Esophagus muscularis mucosa (tissue), 4 donors: ENCODE measurements at regions of chr20 and their contacts with region 1.

Region 1: DNA sequence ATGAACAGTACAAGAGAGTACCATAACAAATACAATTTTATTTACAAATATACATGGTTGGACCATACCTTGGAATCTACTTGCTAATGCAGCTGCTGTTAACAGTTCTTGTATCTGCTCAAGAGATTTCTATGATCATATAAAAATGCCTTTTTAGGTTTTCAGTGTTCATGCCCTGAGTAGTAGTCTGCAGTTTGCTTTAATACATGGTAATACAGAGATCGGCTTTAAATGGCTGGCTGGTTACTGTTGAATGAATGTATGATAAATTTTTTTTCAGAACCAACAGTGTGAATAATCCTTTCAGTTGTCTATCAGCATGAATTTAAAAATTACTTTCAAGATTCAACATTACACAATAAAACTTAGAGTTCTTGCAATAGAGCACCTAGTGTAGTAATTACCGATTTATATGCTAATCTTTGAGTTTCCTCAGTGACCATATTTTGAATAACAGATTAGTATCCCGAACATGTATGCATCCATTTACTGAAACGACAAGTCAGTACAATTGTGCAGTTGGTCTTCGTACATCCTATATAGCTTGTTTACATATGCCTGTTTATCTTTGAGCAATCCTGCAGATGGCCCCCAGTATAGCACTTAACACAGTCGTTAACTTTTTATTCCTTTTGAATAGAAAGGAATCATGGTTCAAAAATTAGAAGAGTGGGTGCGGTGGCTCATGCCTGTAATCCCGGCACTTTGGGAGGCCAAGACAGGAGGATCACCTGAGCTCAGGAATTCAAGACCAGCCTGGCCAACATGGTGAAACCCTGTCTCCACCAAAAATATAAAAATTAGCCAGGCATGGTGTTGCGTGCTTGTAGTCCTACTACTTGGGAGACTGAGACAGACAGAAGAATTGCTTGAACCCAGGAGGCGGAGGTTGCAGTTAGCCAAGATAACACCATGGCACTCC is 6.4 kb downstream of the SRSF6 start:
- DNase-seq: no peak
- H3K4me3 ChIP-seq: no peak overlapping the region
- H3K27ac ChIP-seq: no peak overlapping the region
- H3K4me1 ChIP-seq: peaks cover 9 to 41% (median 28%) of the 10 kb centered on the region in 4 donors
- H3K27me3 ChIP-seq: no peaks in the 10 kb centered on the region
- CTCF ChIP-seq: no peak
- EP300 ChIP-seq: no peak
- POLR2A ChIP-seq: no peak

Region 2: DNA sequence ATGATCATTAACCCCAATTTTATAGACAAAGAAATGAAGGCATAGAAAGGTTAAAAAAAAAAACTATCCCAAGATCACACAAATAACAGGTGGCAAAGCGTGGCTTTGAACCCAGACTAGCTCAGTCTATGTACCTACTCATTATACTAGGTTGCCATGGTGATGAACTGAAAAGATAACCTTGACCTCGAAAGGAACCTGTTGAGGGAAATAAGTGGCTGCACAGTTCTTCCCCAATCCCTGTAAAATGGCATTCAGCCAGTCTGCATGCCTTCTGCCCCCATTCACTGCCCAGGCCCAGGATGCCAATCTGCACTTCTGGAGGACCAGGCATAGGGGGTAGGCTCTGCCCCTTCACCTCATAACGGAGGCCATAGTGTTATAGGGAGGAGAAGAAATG is 569.6 kb before region 1 on chr20:
- intact Hi-C with region 1: no loop called
- DNase-seq: no peak
- H3K4me3 ChIP-seq: no peak overlapping the region
- H3K27ac ChIP-seq: no peak overlapping the region
- H3K4me1 ChIP-seq: peaks cover 0 to 3% (median 0%) of the 10 kb centered on the region in 4 donors
- H3K27me3 ChIP-seq: no peaks in the 10 kb centered on the region
- CTCF ChIP-seq: no peak
- EP300 ChIP-seq: no peak
- POLR2A ChIP-seq: no peak

Region 3: DNA sequence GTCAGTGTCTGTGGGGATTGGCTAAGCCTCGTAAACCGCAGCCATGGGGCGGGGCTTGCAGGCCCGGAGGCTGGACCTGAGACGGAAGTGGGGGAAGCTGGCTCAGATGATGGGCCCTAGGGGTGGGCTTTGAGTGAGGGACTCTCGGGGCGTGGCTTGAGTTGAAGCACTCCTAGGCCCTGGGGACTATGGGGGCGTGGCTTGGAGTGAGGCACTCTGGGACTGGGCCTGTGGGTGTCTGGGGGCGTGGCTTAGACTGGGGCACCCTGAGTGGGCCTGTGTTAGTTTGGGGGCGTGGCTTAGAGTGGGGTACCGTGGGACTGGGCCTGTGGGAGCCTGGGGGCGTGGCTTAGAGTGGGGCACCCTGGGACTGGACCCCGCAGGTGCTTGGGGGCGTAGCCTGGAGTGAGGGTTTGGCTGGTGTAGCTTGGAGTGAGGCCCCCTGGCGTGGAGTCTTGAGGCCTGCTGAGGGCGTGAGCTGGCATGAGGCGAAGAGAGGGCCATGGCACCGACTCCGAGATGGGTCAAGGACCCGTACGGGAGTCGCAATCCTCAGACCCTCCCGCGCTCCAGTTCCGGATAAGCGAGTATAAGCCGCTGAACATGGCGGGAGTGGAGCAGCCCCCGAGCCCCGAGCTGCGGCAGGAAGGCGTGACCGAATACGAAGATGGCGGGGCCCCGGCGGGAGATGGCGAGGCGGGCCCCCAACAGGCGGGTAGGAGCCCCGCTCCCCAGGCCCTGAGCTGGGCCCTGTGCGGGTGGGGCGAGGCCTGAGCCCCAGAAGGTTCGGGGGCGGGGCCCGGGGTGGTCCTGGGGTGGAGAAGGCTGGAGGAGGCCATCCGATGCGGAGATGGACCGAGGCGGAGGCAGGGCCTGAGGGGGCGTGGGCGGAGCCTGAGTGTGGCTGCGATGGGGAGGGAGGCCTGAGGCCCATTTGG is 50.2 kb after region 1 on chr20:
- intact Hi-C with region 1: loop called (anchors 5 kb)
- DNase-seq: peak; percentile 98
- H3K4me3 ChIP-seq: peak overlapping the region; percentile 60 to 72 (median 65)
- H3K27ac ChIP-seq: peak overlapping the region; percentile 55 to 81 (median 78)
- H3K4me1 ChIP-seq: peaks cover 4 to 24% (median 23%) of the 10 kb centered on the region in 4 donors
- H3K27me3 ChIP-seq: no peaks in the 10 kb centered on the region
- CTCF ChIP-seq: peak; percentile 7 to 26 (median 17)
- EP300 ChIP-seq: no peak
- POLR2A ChIP-seq: no peak

Region 4: DNA sequence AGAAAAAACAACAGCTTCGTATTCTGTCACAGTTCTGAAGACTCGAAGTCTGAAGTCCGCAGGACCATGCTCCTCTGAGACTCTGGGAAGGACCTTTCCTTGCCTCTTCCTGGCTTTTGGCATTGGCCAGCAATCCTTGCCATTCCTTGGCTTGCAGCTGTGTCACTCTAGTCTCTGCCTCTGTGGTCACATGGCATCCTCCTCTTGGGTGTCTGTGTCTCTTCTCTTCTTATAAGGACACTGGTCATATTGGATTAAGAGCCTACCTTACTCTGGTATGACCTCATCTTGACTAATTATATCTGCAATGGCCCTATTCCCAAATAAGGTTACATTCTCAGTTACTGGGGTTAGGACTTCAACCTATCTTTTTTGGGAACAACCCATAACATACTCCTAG is 312.5 kb after region 1 on chr20:
- intact Hi-C with region 1: no loop called
- DNase-seq: no peak
- H3K4me3 ChIP-seq: no peak overlapping the region
- H3K27ac ChIP-seq: no peak overlapping the region
- H3K4me1 ChIP-seq: no peaks in the 10 kb centered on the region
- H3K27me3 ChIP-seq: no peaks in the 10 kb centered on the region
- CTCF ChIP-seq: no peak
- EP300 ChIP-seq: no peak
- POLR2A ChIP-seq: no peak

Region 5: GRCh38 chr20:43893183-43893582 is 429.1 kb after region 1 on chr20:
- intact Hi-C with region 1: no loop called
- DNase-seq: no peak
- H3K4me3 ChIP-seq: no peak overlapping the region
- H3K27ac ChIP-seq: no peak overlapping the region
- H3K4me1 ChIP-seq: no peaks in the 10 kb centered on the region
- H3K27me3 ChIP-seq: no peaks in the 10 kb centered on the region
- CTCF ChIP-seq: no peak
- EP300 ChIP-seq: no peak
- POLR2A ChIP-seq: no peak